ENCODE measurements at regions of chrX and their contacts with region 1.

Region 1: GRCh38 chrX:119067023-119067739 is 5.6 kb upstream of the CT47C1 start:
- DNase-seq: peak in 7 of 10 donors; percentile 29 to 91 (median 54)

Region 2: DNA sequence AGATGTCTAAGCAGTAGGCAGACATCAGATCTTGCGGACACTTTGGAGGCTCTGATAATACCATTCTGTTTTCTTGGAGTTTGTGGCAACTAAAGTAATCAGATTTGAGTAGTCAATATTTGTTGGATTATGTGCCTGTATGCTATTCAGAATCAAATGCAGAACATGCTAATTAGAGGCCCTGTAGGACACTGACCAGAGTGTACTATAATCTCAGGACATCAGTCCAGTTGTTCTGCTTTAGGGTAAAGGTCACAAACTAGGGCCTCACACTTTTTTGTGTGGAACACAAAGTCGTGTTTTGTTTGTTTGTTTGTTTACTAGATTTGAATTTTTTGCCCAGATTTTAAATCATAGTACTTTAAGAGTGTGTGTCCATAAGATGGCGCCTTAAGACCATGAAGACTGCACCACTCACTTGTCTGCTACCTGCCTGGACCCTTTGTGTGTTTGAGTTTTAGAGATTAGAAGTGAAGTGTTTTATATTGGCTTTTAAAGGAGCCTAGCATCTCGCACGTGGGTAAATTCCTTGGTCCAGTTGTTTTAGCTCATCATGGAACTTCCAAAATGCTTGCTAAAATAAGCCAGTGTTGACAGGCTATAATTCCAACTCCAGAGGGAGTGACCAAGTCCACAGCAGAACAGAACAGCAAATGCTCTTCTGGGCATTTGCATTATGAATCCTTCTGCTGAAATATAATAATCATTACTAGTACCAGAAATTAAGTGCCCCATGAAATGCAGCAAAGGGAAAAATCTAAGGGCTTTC is 305.1 kb before region 1 on chrX:
- intact Hi-C with region 1: no loop called
- DNase-seq: no peak

Region 3: GRCh38 chrX:118839334-118839958 is 227.7 kb before region 1 on chrX:
- intact Hi-C with region 1: loop called (anchors 2 kb)
- DNase-seq: peak; percentile 68 to 97 (median 85)